Adrenal gland (tissue), 19 donors: ENCODE measurements at regions of chr10 and their contacts with region 1.

Region 1: DNA sequence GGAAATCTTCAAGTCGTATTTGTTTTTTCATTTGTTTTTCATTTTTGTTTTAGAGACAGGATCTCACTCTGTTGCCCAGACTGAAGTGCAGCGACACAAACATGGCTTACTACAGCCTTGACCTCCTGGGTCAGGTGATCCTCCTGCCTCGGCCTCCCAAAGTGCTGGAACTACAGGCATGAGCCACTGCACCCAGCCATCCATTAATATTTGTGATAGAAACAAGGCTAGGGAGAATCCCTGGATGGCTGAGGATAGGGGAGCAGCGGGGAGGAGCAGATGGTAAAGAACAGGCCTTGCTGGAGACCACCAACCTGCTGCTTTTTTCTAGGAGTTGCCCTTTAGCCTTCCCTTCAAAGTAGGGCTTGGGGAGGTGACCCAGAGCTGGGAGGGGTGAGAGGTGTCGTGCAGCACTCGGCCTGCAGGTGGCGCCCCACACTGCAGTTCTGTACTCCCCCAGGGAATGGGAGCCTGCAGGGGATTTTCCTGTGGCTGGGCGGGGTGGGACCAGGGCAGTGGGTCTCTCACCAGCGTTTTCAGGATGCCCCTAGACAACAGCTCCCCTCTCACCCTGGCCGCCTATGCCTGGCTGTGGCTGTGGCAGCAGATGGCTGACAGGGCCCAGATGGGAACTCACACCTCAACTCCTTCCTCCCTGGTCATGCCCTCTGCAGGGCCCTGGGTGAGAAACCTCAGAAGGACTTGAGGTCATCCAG is 12.6 kb upstream of the CDH23 start:
- DNase-seq: peak; percentile 49 to 84 (median 73)
- H3K4me3 ChIP-seq: no peak overlapping the region
- H3K27ac ChIP-seq: no peak overlapping the region
- H3K4me1 ChIP-seq: no peaks in the 10 kb centered on the region
- H3K27me3 ChIP-seq: no peaks in the 10 kb centered on the region
- CTCF ChIP-seq: peak; percentile 78 to 94 (median 90)
- POLR2A ChIP-seq: no peak

Region 2: DNA sequence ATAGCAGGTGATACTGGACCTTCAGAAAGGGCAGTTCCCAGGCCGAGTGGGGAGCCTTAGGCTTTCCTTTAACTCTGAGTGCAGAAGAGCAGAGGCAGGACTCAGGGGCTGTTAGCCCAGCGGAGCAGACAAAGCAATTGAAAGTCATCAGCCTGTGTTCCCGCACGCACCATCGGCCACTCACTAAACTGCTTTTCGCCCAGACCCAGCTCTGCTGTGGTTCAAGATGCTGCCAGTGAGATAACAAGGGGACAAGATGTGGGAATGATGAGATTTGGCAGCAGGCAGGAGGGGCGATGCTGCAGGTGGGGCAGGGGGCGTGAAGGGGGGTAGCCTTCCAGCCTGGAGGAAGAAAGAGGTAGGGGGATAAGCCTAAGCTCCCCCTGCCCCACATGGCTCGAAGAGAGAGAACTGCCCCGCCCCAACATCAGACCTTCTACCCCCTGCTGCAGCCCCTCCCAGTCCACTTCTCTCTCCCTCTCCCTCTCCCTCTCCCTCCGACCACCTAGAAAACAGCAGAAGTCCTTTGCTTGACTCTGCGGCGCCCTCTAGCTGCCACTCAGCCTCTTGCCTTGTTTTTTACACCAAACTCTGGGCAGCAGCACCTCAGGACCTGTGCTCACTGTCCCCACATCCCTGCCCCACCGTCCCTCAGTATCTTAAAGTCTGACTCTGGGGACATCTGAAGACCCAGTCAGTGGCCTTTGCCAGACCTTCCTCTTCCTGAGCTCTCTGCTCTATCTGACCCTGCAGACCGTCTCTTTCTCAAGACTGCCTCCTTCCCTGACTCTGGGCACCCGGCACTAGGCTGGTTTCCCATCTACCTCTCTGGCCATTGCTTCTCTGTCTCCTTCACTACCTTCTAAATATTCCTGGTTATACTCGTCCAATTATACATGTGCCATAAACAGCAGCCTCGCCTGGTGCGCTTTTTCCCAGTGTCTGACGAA is 225.0 kb after region 1 on chr10:
- intact Hi-C with region 1: loop called (anchors 10 kb)
- DNase-seq: peak; percentile 64 to 94 (median 86)
- H3K4me3 ChIP-seq: no peak overlapping the region
- H3K27ac ChIP-seq: no peak overlapping the region
- H3K4me1 ChIP-seq: peaks cover 0 to 8% of the 10 kb centered on the region in 2 donors
- H3K27me3 ChIP-seq: no peaks in the 10 kb centered on the region
- CTCF ChIP-seq: peak; percentile 71 to 87 (median 78)
- POLR2A ChIP-seq: no peak

Region 3: DNA sequence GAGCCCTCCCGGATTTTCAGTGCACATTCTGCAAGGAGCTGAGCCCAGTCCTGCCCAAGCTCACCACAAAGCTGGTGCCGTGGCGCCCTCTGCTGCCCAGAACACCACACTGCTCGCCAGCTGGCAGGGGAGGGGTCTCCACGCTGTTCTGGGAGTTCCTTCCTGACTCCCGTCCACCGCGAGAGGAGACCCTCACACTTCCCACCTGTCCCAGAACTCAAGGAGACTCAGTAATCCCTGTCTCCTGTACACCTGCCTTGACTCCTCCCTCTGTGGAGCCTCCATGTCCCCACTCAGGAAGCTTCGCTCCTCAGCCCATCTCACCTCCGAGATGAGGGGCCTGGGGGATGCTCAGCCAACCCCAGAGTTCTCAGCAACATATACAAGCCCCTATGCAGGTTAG is 324.2 kb after region 1 on chr10:
- intact Hi-C with region 1: loop called in 1 of 2 experiments (anchors 10 kb)
- DNase-seq: peak in 6 of 7 donors; percentile 43 to 63 (median 49)
- H3K4me3 ChIP-seq: no peak overlapping the region
- H3K27ac ChIP-seq: no peak overlapping the region
- H3K4me1 ChIP-seq: peaks cover 8 to 9% of the 10 kb centered on the region in 2 donors
- H3K27me3 ChIP-seq: no peaks in the 10 kb centered on the region
- CTCF ChIP-seq: peak; percentile 71 to 85 (median 79)
- POLR2A ChIP-seq: no peak